ENCODE measurements at regions of chr3 and their contacts with region 1.

Region 1: GRCh38 chr3:128680602-128681368 is 30.2 kb upstream of the RPN1 start:
- DNase-seq: peak; percentile 100
- ATAC-seq: peak; percentile 98
- H3K4me3 ChIP-seq: peak overlapping the region; percentile 60
- H3K27ac ChIP-seq: peak overlapping the region; percentile 97
- H3K4me1 ChIP-seq: peaks cover 18% of the 10 kb centered on the region
- H3K27me3 ChIP-seq: no peaks in the 10 kb centered on the region
- CTCF ChIP-seq: peak; percentile 95

Region 2: GRCh38 chr3:128316481-128316891 is 364.3 kb before region 1 on chr3:
- intact Hi-C with region 1: no loop called
- DNase-seq: peak; percentile 55
- ATAC-seq: no peak
- H3K4me3 ChIP-seq: no peak overlapping the region
- H3K27ac ChIP-seq: no peak overlapping the region
- H3K4me1 ChIP-seq: no peaks in the 10 kb centered on the region
- H3K27me3 ChIP-seq: no peaks in the 10 kb centered on the region
- CTCF ChIP-seq: no peak

Region 3: GRCh38 chr3:128794770-128795649 is 114.2 kb after region 1 on chr3:
- intact Hi-C with region 1: loop called (anchors 10 kb)
- DNase-seq: no peak
- ATAC-seq: peak; percentile 98
- H3K4me3 ChIP-seq: no peak overlapping the region
- H3K27ac ChIP-seq: no peak overlapping the region
- H3K4me1 ChIP-seq: peaks cover 13% of the 10 kb centered on the region
- H3K27me3 ChIP-seq: no peaks in the 10 kb centered on the region
- CTCF ChIP-seq: peak; percentile 83

Measured in upper lobe of right lung (tissue), 1 donor.